ENCODE measurements at regions of chr2 and their contacts with region 1.

Region 1: GRCh38 chr2:37672104-37672869 is 845 bp upstream of the CDC42EP3 start:
- DNase-seq: peak; percentile 79 to 83
- ATAC-seq: peak; percentile 72 to 87 (median 76)
- H3K4me3 ChIP-seq: peak overlapping the region; percentile 78 to 99 (median 95)
- H3K27ac ChIP-seq: peak overlapping the region; percentile 91 to 100 (median 99)
- H3K4me1 ChIP-seq: peaks cover 3 to 61% (median 30%) of the 10 kb centered on the region in 9 donors
- H3K27me3 ChIP-seq: no peaks in the 10 kb centered on the region
- CTCF ChIP-seq: peak in 2 of 9 donors; percentile 8 to 12

Region 2: DNA sequence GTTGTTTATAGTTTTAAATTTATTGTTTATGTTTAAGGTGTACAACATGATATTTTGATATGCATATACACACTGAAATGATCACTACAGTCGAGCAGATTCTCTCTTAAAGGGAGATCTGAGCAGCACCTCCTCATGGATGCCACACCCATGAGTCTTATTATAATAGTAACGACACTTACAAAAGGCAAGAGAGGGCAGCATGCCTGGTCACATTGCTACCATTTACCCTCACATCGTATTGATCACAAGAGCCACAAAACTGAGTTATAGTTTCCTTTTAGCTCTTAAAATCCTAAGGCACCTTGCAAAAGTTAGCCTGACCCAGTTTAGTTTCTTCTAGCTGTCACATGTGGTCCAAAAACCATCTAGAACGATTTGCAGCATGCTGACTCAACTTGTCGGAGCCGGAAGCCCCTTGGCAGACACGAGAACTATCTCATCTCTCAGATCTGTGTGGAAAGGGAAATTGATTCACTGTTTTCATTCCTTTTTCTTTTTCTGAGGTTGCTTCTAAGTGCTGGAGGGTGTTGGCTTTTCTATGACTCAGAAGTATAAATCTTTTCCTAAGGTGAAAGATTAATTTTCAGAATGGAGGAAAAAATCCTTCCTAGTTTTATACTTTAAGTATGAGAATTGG is 86.2 kb before region 1 on chr2:
- intact Hi-C with region 1: loop called in 1 of 10 experiments (anchors 5 kb)
- DNase-seq: no peak
- ATAC-seq: peak in 7 of 8 donors; percentile 26 to 73 (median 60)
- H3K4me3 ChIP-seq: no peak overlapping the region
- H3K27ac ChIP-seq: peak overlapping the region in 4 of 10 donors; percentile 13 to 66 (median 27)
- H3K4me1 ChIP-seq: peaks cover 0 to 69% (median 33%) of the 10 kb centered on the region in 9 donors
- H3K27me3 ChIP-seq: no peaks in the 10 kb centered on the region
- CTCF ChIP-seq: no peak

Region 3: GRCh38 chr2:37615804-37616676 is 56.2 kb before region 1 on chr2:
- intact Hi-C with region 1: no loop called
- DNase-seq: peak in 1 of 2 donors; percentile 40
- ATAC-seq: peak in 7 of 8 donors; percentile 23 to 71 (median 50)
- H3K4me3 ChIP-seq: no peak overlapping the region
- H3K27ac ChIP-seq: peak overlapping the region in 4 of 10 donors; percentile 14 to 73 (median 40)
- H3K4me1 ChIP-seq: peaks cover 4 to 49% (median 29%) of the 10 kb centered on the region in 9 donors
- H3K27me3 ChIP-seq: no peaks in the 10 kb centered on the region
- CTCF ChIP-seq: no peak

Region 4: GRCh38 chr2:37629529-37629928 is 42.8 kb before region 1 on chr2:
- intact Hi-C with region 1: no loop called
- DNase-seq: no peak
- ATAC-seq: peak in 3 of 8 donors; percentile 15 to 37 (median 35)
- H3K4me3 ChIP-seq: no peak overlapping the region
- H3K27ac ChIP-seq: peak overlapping the region in 1 of 10 donors; percentile 30
- H3K4me1 ChIP-seq: peaks cover 0 to 57% (median 16%) of the 10 kb centered on the region in 9 donors
- H3K27me3 ChIP-seq: no peaks in the 10 kb centered on the region
- CTCF ChIP-seq: no peak

Region 5: GRCh38 chr2:37653805-37654378 is 18.4 kb before region 1 on chr2:
- intact Hi-C with region 1: loop called in 2 of 10 experiments (anchors 1 to 2 kb)
- DNase-seq: peak; percentile 68
- ATAC-seq: peak; percentile 59 to 86 (median 76)
- H3K4me3 ChIP-seq: peak overlapping the region in 7 of 10 donors; percentile 6 to 40 (median 17)
- H3K27ac ChIP-seq: peak overlapping the region; percentile 77 to 99 (median 90)
- H3K4me1 ChIP-seq: peaks cover 46 to 100% (median 97%) of the 10 kb centered on the region in 9 donors
- H3K27me3 ChIP-seq: no peaks in the 10 kb centered on the region
- CTCF ChIP-seq: no peak

Region 6: DNA sequence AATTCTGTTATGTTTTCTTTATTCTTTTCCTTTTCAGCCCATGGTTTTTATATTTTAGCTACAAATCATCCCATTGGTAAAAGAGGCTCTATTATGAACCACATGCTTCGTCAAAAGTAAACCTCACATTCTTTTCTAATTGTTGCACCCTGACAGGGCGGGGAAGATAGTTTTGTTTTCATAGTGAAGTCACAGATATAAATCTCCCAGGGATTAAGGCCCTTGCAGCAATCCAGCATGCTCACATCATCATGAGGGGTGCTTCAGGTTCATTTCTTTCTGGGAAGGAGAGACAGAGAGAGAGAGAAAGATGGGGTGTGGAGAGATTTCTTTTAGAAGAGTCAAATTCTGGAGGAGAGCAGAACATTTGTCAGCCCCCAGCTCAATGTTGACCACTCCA is 123.7 kb after region 1 on chr2:
- intact Hi-C with region 1: loop called in 4 of 10 experiments (anchors 5 to 10 kb)
- DNase-seq: no peak
- ATAC-seq: no peak
- H3K4me3 ChIP-seq: no peak overlapping the region
- H3K27ac ChIP-seq: peak overlapping the region in 5 of 10 donors; percentile 3 to 85 (median 71)
- H3K4me1 ChIP-seq: peaks cover 0 to 34% (median 10%) of the 10 kb centered on the region in 9 donors
- H3K27me3 ChIP-seq: no peaks in the 10 kb centered on the region
- CTCF ChIP-seq: no peak

Region 7: GRCh38 chr2:37809525-37809924 is 137.2 kb after region 1 on chr2:
- intact Hi-C with region 1: loop called in 2 of 10 experiments (anchors 5 to 10 kb)
- DNase-seq: peak in 1 of 2 donors; percentile 46
- ATAC-seq: peak in 5 of 8 donors; percentile 22 to 80 (median 54)
- H3K4me3 ChIP-seq: no peak overlapping the region
- H3K27ac ChIP-seq: peak overlapping the region in 5 of 10 donors; percentile 21 to 63 (median 37)
- H3K4me1 ChIP-seq: peaks cover 4 to 17% (median 8%) of the 10 kb centered on the region in 9 donors
- H3K27me3 ChIP-seq: no peaks in the 10 kb centered on the region
- CTCF ChIP-seq: peak in 8 of 9 donors; percentile 27 to 68 (median 60)

Region 8: GRCh38 chr2:37871456-37872191 is 199.3 kb after region 1 on chr2:
- intact Hi-C with region 1: loop called in 5 of 10 experiments (anchors 5 to 10 kb)
- DNase-seq: no peak
- ATAC-seq: peak in 7 of 8 donors; percentile 3 to 52 (median 40)
- H3K4me3 ChIP-seq: no peak overlapping the region
- H3K27ac ChIP-seq: peak overlapping the region in 7 of 10 donors; percentile 43 to 84 (median 74)
- H3K4me1 ChIP-seq: peaks cover 16 to 94% (median 74%) of the 10 kb centered on the region in 9 donors
- H3K27me3 ChIP-seq: no peaks in the 10 kb centered on the region
- CTCF ChIP-seq: no peak

Measured in heart right ventricle (tissue), 16 donors.